OCI-LY7 (cell line): ENCODE measurements at regions of chr15 and their contacts with region 1.

Region 1: DNA sequence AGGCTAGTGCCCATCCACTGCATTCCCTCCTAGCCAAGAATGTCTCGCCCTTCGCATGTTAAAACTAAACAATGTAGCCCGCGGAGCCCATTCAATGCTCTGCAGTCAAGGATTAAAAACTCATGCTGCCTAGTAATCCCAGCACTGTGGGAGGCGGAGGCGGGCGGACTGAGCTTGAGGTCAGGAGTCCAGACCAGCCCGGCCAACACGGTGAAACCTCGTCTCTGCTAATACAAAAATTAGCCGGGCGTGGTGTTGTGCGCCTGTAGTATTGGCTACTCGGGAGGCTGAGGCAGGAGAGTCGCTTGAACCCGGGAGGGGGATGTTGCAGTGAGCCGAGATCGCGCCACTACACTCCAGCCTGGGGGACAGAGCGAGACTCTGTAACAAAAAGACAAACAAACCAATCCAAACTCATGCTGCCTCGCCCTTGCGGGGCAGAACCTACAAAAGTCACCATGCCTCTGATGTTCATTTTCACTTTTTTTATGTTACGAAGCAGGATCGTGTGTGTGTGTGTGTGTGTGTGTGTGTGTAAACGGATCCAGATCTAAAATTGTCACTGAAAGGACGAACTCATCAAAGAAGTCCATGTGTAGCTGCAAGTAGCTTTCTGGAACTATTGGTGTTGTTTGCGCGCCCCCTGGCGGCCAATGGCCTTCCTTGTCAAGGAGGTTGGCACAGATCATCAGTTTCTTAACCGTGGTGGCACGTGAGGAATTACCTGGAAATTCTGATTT is 54.8 kb upstream of the SPESP1 start:
- DNase-seq: peak; percentile 94
- H3K4me3 ChIP-seq: peak overlapping the region; percentile 22
- H3K27ac ChIP-seq: peak overlapping the region; percentile 29
- H3K4me1 ChIP-seq: peaks cover 38% of the 10 kb centered on the region
- CTCF ChIP-seq: peak; percentile 93

Region 2: DNA sequence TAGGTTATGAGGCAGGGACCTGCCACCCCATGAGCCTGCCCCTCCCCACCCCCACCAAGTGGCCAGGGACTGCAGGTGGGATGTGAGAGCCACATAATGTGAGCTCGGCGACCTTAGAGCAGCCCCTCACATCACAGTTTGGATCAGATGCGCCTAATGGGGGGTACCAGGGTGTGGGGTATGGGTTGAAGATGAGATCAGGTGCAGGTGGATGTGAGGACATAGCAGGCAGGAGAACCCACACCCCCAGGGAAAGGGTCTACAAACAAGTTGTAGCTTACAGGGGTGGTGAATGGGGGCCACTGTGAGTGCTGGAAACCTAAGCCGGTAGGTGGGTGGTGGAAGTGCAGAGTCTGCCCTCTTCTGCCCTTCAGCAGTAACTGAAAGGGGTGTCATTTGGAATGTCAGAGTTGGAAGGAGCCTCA is 202.8 kb before region 1 on chr15:
- CTCF ChIA-PET with region 1: interaction called, 13 read pairs
- POLR2A ChIA-PET with region 1: no interaction called
- intact Hi-C with region 1: loop called (anchors 2 kb)
- DNase-seq: peak; percentile 70
- H3K4me3 ChIP-seq: no peak overlapping the region
- H3K27ac ChIP-seq: peak overlapping the region; percentile 14
- H3K4me1 ChIP-seq: peaks cover 47% of the 10 kb centered on the region
- CTCF ChIP-seq: peak; percentile 76

Region 3: DNA sequence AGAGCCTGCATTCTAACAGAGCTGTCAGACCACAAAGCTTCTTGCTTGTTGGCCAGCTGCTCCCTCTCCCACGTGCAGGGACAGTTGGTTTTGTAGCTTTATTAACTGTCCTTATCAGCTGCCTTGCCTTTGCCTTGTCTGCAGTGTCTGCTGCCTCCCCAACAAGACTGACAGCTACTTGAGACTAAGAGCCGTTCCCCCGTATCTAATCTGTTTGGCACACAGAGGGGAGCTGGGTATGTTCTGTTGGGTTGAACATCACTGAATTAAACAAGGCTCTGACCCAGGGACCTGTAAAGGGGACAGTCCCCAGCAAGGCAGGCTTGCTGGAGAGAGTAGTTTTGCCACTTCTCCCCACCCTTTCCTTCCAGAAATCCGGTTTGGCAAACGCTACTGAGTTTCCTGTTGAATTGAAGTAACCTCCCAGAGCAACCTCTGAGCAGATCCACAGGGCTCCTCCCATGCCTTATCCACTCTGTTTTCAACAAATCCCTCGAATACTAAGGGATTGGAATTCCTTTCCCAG is 171.0 kb before region 1 on chr15:
- CTCF ChIA-PET with region 1: no interaction called
- POLR2A ChIA-PET with region 1: no interaction called
- intact Hi-C with region 1: no loop called
- DNase-seq: no peak
- H3K4me3 ChIP-seq: no peak overlapping the region
- H3K27ac ChIP-seq: no peak overlapping the region
- H3K4me1 ChIP-seq: no peaks in the 10 kb centered on the region
- CTCF ChIP-seq: no peak

Region 4: GRCh38 chr15:68730471-68730919 is 145.1 kb before region 1 on chr15:
- CTCF ChIA-PET with region 1: interaction called, 5 read pairs
- POLR2A ChIA-PET with region 1: no interaction called
- intact Hi-C with region 1: loop called (anchors 1 kb)
- DNase-seq: peak; percentile 71
- H3K4me3 ChIP-seq: no peak overlapping the region
- H3K27ac ChIP-seq: no peak overlapping the region
- H3K4me1 ChIP-seq: peaks cover 7% of the 10 kb centered on the region
- CTCF ChIP-seq: peak; percentile 86

Region 5: GRCh38 chr15:68783226-68784058 is 92.1 kb before region 1 on chr15:
- CTCF ChIA-PET with region 1: interaction called, 7 read pairs
- POLR2A ChIA-PET with region 1: no interaction called
- intact Hi-C with region 1: loop called (anchors 1 kb)
- DNase-seq: peak; percentile 66
- H3K4me3 ChIP-seq: no peak overlapping the region
- H3K27ac ChIP-seq: no peak overlapping the region
- H3K4me1 ChIP-seq: no peaks in the 10 kb centered on the region
- CTCF ChIP-seq: peak; percentile 80

Region 6: GRCh38 chr15:68852461-68852860 is 23.1 kb before region 1 on chr15:
- CTCF ChIA-PET with region 1: interaction called, 3 read pairs
- POLR2A ChIA-PET with region 1: interaction called, 11 read pairs
- intact Hi-C with region 1: loop called (anchors 2 kb)
- DNase-seq: no peak
- H3K4me3 ChIP-seq: peak overlapping the region; percentile 51
- H3K27ac ChIP-seq: peak overlapping the region; percentile 97
- H3K4me1 ChIP-seq: peaks cover 79% of the 10 kb centered on the region
- CTCF ChIP-seq: peak; percentile 43; the same call in 1 of the 2 replicates

Region 7: GRCh38 chr15:68924866-68925560 is 49.5 kb after region 1 on chr15:
- CTCF ChIA-PET with region 1: no interaction called
- POLR2A ChIA-PET with region 1: no interaction called
- intact Hi-C with region 1: loop called (anchors 5 kb)
- DNase-seq: peak; percentile 88
- H3K4me3 ChIP-seq: no peak overlapping the region
- H3K27ac ChIP-seq: no peak overlapping the region
- H3K4me1 ChIP-seq: peaks cover 19% of the 10 kb centered on the region
- CTCF ChIP-seq: peak; percentile 100